ENCODE measurements at regions of chr19 and their contacts with region 1.

Region 1: GRCh38 chr19:17703824-17704463 is 15.3 kb upstream of the MAP1S start:
- DNase-seq: peak; percentile 62 to 71 (median 66)
- H3K4me3 ChIP-seq: no peak overlapping the region
- H3K4me3 Mint-ChIP-seq: no peak overlapping the region
- H3K27ac ChIP-seq: no peak overlapping the region
- H3K27ac Mint-ChIP-seq: peak overlapping the region in 2 of 7 donors; percentile 5 to 78
- H3K4me1 ChIP-seq: no peaks in the 10 kb centered on the region
- H3K4me1 Mint-ChIP-seq: peaks cover 0 to 2% (median 0%) of the 10 kb centered on the region in 4 donors
- H3K27me3 ChIP-seq: no peaks in the 10 kb centered on the region
- H3K27me3 Mint-ChIP-seq: peaks cover 3 to 10% of the 10 kb centered on the region in 2 donors

Region 2: DNA sequence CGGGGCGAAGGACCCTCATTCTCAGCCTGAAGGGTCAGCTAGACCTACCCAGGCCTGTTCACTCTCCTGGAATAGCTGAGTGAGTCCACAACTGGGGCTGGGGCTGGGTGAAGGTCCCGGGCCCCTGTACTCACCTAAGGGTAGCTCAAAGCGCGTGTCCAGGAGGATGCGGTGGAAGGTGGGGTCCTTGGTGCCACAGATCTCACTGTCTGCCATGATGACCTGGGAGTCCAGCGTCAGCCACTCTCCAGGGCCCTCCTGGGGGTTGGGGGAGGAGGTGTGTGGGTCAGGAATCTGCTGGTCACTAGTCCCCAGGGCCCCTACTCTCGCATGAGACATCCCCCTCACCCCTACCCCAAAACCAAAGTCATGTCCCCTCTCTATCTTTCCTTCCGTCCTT is 34.5 kb before region 1 on chr19:
- CTCF ChIA-PET with region 1: no interaction called
- POLR2A ChIA-PET with region 1: no interaction called
- intact Hi-C with region 1: no loop called
- DNase-seq: no peak
- H3K4me3 ChIP-seq: no peak overlapping the region
- H3K4me3 Mint-ChIP-seq: no peak overlapping the region
- H3K27ac ChIP-seq: no peak overlapping the region
- H3K27ac Mint-ChIP-seq: no peak overlapping the region
- H3K4me1 ChIP-seq: no peaks in the 10 kb centered on the region
- H3K4me1 Mint-ChIP-seq: no peaks in the 10 kb centered on the region
- H3K27me3 ChIP-seq: no peaks in the 10 kb centered on the region
- H3K27me3 Mint-ChIP-seq: peaks cover 12 to 15% of the 10 kb centered on the region in 2 donors

Region 3: GRCh38 chr19:17766543-17767131 is 62.7 kb after region 1 on chr19:
- CTCF ChIA-PET with region 1: interaction called, 16 read pairs
- POLR2A ChIA-PET with region 1: no interaction called
- intact Hi-C with region 1: no loop called
- DNase-seq: no peak
- H3K4me3 ChIP-seq: no peak overlapping the region
- H3K4me3 Mint-ChIP-seq: no peak overlapping the region
- H3K27ac ChIP-seq: no peak overlapping the region
- H3K27ac Mint-ChIP-seq: no peak overlapping the region
- H3K4me1 ChIP-seq: no peaks in the 10 kb centered on the region
- H3K4me1 Mint-ChIP-seq: peaks cover 0 to 5% (median 3%) of the 10 kb centered on the region in 4 donors
- H3K27me3 ChIP-seq: no peaks in the 10 kb centered on the region
- H3K27me3 Mint-ChIP-seq: no peaks in the 10 kb centered on the region

Region 4: DNA sequence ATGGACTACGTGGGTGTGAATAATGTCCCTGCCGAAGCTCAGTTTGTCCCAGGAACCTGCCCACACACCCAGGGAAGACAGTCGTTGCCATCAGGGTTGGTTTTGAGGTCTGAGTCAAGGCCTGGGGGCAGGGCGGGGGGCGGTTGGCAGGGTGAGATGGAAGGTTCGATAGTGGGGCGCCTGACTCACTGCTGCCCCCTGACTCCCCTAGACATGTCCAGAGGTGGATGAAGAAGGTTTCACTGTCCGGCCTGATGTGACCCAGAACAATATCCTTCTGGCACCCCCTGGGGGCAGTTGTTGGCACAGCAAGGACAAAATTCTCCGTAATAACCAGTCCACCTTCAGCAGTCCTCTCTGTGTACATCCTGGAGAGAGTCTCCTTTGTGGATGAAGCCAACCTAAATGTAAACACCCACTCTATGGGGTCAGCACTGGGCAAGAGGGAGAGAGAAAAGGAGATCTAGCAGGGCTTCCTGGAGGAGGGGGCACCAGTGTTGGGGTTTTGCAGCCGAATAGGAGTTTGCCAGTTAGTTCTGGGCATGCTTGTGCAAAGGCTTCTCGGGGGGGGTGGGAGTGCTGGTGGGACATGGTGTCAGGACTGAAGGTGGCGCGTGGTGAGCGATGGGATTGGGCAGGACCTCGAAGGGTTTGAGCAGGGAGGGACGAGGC is 71.4 kb after region 1 on chr19:
- CTCF ChIA-PET with region 1: interaction called, 17 read pairs
- POLR2A ChIA-PET with region 1: no interaction called
- intact Hi-C with region 1: loop called (anchors 1 kb)
- DNase-seq: no peak
- H3K4me3 ChIP-seq: no peak overlapping the region
- H3K4me3 Mint-ChIP-seq: no peak overlapping the region
- H3K27ac ChIP-seq: no peak overlapping the region
- H3K27ac Mint-ChIP-seq: peak overlapping the region in 6 of 7 donors; percentile 24 to 75 (median 38)
- H3K4me1 ChIP-seq: no peaks in the 10 kb centered on the region
- H3K4me1 Mint-ChIP-seq: peaks cover 2 to 7% (median 5%) of the 10 kb centered on the region in 4 donors
- H3K27me3 ChIP-seq: no peaks in the 10 kb centered on the region
- H3K27me3 Mint-ChIP-seq: no peaks in the 10 kb centered on the region

Region 5: DNA sequence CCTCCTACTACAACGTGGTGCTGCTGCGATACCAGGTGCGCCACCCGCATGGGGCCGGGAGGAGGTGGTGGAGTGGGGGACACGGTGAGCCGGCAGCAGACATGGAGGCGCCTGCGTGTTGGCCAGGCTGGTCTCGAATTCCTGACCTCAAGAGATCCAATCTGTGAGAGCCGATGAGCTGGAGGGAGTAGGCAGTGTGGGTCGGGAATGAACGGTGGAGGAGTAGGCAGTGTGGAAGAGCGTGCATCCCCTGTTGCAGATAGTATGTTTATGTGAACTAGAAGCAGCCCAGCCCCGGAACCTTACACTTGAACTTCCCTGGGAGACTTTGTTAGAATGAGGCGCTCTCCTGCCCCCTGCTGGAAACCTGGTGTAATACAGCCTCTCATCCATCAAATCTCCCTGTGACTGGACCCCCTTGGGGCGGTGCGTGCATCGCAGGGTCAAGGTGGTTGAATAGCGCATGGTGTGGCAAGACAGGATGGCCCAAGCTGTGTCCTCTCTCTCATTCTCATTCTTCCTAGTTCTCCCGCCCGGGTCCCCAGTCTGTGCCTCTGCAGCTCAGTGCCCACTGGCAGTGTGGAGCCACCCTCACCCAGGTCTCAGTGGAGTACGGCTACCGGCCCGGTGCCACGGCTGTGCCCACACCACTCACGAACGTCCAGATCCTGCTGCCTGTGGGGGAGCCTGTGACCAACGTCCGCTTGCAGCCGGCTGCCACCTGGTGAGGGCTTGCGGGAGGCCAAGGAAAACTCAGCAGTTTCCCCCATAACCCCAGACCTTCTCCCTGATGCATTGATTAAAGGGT is 80.5 kb after region 1 on chr19:
- CTCF ChIA-PET with region 1: interaction called, 16 read pairs
- POLR2A ChIA-PET with region 1: no interaction called
- intact Hi-C with region 1: loop called (anchors 1 kb)
- DNase-seq: peak; percentile 68 to 72 (median 68)
- H3K4me3 ChIP-seq: no peak overlapping the region
- H3K4me3 Mint-ChIP-seq: peak overlapping the region in 2 of 8 donors; percentile 24 to 49
- H3K27ac ChIP-seq: no peak overlapping the region
- H3K27ac Mint-ChIP-seq: peak overlapping the region in 6 of 7 donors; percentile 0 to 86 (median 67)
- H3K4me1 ChIP-seq: peaks cover 6% of the 10 kb centered on the region
- H3K4me1 Mint-ChIP-seq: peaks cover 7 to 16% (median 15%) of the 10 kb centered on the region in 4 donors
- H3K27me3 ChIP-seq: no peaks in the 10 kb centered on the region
- H3K27me3 Mint-ChIP-seq: no peaks in the 10 kb centered on the region

Region 6: DNA sequence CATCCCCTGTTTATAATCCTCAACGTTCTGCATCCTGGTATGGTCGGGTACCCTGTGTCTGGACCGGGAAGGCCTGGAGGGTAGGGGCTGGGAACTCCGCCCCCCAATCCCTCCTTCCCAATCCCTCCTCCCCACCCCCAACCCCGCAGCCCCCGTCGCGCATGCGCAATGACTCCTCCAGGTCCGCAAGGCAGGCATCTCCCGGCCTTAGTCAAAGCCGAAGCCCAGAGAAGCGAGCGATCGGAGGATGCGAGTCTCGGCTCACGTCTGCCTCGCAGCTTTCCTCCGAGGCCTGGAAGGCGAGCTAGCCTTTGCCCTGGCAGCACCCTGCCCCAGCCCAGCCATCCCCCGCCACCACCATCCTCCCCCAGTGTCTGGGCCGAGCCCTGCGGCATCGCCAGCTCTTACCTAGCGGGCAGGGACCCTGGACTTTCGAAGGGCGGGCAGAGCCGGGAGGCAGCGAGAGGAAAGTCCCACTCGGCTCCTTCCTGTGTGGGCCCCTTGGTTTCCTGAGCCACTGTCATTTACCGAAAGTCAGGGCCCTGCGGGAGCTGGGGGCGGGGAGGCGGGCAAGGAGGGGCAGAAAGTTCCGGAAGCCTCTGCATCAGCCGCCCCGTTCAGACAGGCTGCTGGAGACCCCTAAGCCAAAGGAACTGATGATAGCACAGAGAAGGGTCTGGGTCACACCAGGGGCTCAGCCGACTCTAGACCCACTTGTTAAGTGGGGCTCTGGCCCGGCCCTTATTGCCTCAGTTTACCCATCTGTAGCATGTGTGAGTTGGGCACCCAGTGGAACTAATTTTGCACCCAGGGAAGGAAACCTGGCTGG is 143.8 kb after region 1 on chr19 and contains the start of gene JAK3:
- CTCF ChIA-PET with region 1: interaction called, 108 read pairs
- POLR2A ChIA-PET with region 1: interaction called, 6 read pairs
- intact Hi-C with region 1: no loop called
- DNase-seq: peak; percentile 80 to 91 (median 84)
- H3K4me3 ChIP-seq: peak within 1 kb of the TSS; percentile 52 to 76
- H3K4me3 Mint-ChIP-seq: peak within 1 kb of the TSS; percentile 91 to 98 (median 94)
- H3K27ac ChIP-seq: peak within 1 kb of the TSS; percentile 91
- H3K27ac Mint-ChIP-seq: peak within 1 kb of the TSS; percentile 95 to 98 (median 97)
- H3K4me1 ChIP-seq: peaks cover 76% of the 10 kb centered on the region
- H3K4me1 Mint-ChIP-seq: peaks cover 39 to 80% (median 59%) of the 10 kb centered on the region in 4 donors
- H3K27me3 ChIP-seq: no peaks in the 10 kb centered on the region
- H3K27me3 Mint-ChIP-seq: no peaks in the 10 kb centered on the region
- total RNA-seq, gene JAK3: 132 to 135 TPM